B cell (primary cell): ENCODE measurements at regions of chr11 and their contacts with region 1.

Region 1: DNA sequence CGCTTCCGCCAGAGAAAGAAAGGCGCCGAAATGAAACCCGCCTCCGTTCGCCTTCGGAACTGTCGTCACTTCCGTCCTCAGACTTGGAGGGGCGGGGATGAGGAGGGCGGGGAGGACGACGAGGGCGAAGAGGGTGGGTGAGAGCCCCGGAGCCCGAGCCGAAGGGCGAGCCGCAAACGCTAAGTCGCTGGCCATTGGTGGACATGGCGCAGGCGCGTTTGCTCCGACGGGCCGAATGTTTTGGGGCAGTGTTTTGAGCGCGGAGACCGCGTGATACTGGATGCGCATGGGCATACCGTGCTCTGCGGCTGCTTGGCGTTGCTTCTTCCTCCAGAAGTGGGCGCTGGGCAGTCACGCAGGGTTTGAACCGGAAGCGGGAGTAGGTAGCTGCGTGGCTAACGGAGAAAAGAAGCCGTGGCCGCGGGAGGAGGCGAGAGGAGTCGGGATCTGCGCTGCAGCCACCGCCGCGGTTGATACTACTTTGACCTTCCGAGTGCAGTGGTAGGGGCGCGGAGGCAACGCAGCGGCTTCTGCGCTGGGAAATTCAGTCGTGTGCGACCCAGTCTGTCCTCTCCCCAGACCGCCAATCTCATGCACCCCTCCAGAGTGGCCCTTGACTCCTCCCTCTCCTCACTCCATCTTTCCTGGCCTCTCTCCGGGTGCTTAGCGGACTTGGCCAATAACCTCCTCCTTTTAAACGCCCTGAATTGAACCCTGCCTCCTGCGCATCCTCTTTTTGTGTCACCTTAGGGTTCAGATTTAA is at the start of gene ATM:
- DNase-seq: peak; percentile 100
- ATAC-seq: peak; percentile 81
- H3K4me3 ChIP-seq: peak within 1 kb of the TSS; percentile 97 to 99 (median 98)
- H3K4me3 Mint-ChIP-seq: no peak within 1 kb of the TSS
- H3K27ac ChIP-seq: peak within 1 kb of the TSS; percentile 98 to 99
- H3K27ac Mint-ChIP-seq: no peak within 1 kb of the TSS
- H3K4me1 ChIP-seq: peaks cover 58% of the 10 kb centered on the region in 2 donors
- H3K4me1 Mint-ChIP-seq: peaks cover 62% of the 10 kb centered on the region
- H3K27me3 ChIP-seq: no peaks in the 10 kb centered on the region
- H3K27me3 Mint-ChIP-seq: no peaks in the 10 kb centered on the region
- CTCF ChIP-seq: peak; percentile 77
- total RNA-seq, gene ATM: 446 and 471 TPM in 2 replicates

Region 2: DNA sequence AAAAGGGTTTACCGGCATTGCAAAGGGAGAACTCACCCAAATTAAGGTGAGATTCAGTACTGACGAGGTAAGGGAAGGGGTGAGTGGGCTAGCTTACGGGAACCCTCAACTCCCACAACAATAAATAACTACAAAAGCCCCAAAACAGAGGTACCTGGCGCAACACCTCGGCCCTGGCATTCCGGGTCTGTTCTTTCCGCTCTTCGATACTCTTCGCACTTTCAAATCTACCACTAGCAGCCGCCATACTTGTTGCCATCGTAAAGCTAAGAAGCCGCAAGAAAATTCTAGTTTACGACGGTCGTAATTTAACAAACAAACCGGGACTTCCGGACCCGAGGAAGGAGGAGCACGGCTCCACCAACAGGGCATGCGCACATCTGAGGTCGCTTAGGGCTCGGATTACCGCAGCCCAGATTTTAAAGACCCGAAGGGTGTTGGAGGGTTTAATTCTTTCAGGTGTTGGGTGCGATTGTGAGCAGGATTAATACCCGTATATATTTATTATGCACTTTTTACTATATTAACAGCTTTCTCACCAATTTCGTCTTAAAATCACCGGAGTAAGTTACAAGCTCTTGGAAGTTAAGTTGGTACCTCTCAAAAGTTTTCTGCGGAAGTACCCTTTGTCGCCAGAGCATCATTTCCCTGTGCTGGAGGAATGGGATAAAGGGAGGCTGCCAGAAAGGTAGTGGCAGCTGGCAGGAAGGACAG is 765.2 kb before region 1 on chr11 and contains the start of gene CWF19L2:
- CTCF ChIA-PET with region 1: no interaction called
- POLR2A ChIA-PET with region 1: no interaction called
- intact Hi-C with region 1: loop called (anchors 2 kb)
- DNase-seq: peak; percentile 94
- ATAC-seq: peak; percentile 96
- H3K4me3 ChIP-seq: peak within 1 kb of the TSS; percentile 65 to 99 (median 94)
- H3K4me3 Mint-ChIP-seq: peak within 1 kb of the TSS; percentile 94
- H3K27ac ChIP-seq: peak within 1 kb of the TSS; percentile 64 to 88
- H3K27ac Mint-ChIP-seq: peak within 1 kb of the TSS; percentile 93
- H3K4me1 ChIP-seq: peaks cover 12 to 14% of the 10 kb centered on the region in 2 donors
- H3K4me1 Mint-ChIP-seq: peaks cover 27% of the 10 kb centered on the region
- H3K27me3 ChIP-seq: no peaks in the 10 kb centered on the region
- H3K27me3 Mint-ChIP-seq: peaks cover 5% of the 10 kb centered on the region
- CTCF ChIP-seq: no peak
- total RNA-seq, gene CWF19L2: 44.3 and 44.6 TPM in 2 replicates

Region 3: DNA sequence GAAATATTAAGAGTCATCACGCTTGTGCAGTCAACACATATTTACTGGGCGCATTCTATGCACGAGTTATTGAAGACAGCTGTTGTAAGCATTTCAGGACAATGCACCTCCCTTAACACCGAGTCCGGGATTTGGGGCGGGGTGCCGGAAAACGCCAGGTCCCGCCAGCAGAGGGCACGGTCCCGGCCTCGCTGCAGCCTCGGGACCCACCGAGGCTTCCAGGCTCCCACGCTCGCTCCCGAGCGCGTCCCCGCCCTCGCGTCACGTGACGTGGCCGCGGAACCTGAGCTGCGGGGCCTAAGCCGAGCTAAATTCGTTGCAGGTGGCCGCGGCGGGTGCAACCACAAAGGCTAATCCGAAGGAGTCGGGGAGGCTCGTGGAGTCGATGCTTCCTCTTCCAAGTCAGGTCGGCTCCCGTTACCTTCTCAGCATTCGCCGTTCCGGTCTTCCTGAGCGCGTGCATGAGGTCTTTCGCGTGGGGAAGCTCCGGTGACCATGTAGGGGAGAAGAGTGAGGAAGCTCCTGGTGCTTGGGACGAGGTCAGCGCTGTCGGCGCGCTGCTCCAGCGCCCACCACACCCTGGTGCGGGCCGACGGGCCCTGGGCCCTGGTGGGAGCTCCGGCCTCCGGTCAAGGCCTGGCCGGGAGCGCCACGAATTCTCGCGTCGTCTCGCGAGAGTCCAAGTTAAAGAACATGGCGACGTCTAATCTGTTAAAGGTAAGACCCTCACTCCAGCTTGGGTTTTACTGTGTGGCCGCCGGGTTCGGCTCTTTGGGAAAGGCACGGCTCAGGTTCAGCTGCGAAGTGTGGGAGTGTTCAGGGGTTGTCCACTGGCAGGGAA is 214.0 kb before region 1 on chr11 and contains the start of gene CUL5:
- CTCF ChIA-PET with region 1: interaction called, 7 read pairs
- POLR2A ChIA-PET with region 1: no interaction called
- intact Hi-C with region 1: loop called (anchors 2 kb)
- DNase-seq: peak; percentile 95
- ATAC-seq: peak; percentile 91
- H3K4me3 ChIP-seq: peak within 1 kb of the TSS; percentile 79 to 100 (median 99)
- H3K4me3 Mint-ChIP-seq: peak within 1 kb of the TSS; percentile 99
- H3K27ac ChIP-seq: peak within 1 kb of the TSS; percentile 95 to 97
- H3K27ac Mint-ChIP-seq: peak within 1 kb of the TSS; percentile 98
- H3K4me1 ChIP-seq: peaks cover 18 to 20% of the 10 kb centered on the region in 2 donors
- H3K4me1 Mint-ChIP-seq: peaks cover 26% of the 10 kb centered on the region
- H3K27me3 ChIP-seq: no peaks in the 10 kb centered on the region
- H3K27me3 Mint-ChIP-seq: no peaks in the 10 kb centered on the region
- CTCF ChIP-seq: peak; percentile 80
- total RNA-seq, gene CUL5: 44.1 and 47.0 TPM in 2 replicates

Region 4: GRCh38 chr11:108197351-108197750 is 25.5 kb before region 1 on chr11:
- CTCF ChIA-PET with region 1: no interaction called
- POLR2A ChIA-PET with region 1: no interaction called
- intact Hi-C with region 1: no loop called
- DNase-seq: no peak
- ATAC-seq: no peak
- H3K4me3 ChIP-seq: no peak overlapping the region
- H3K4me3 Mint-ChIP-seq: no peak overlapping the region
- H3K27ac ChIP-seq: no peak overlapping the region
- H3K27ac Mint-ChIP-seq: no peak overlapping the region
- H3K4me1 ChIP-seq: peaks cover 14 to 19% of the 10 kb centered on the region in 2 donors
- H3K4me1 Mint-ChIP-seq: peaks cover 40% of the 10 kb centered on the region
- H3K27me3 ChIP-seq: no peaks in the 10 kb centered on the region
- H3K27me3 Mint-ChIP-seq: no peaks in the 10 kb centered on the region
- CTCF ChIP-seq: no peak

Region 5: DNA sequence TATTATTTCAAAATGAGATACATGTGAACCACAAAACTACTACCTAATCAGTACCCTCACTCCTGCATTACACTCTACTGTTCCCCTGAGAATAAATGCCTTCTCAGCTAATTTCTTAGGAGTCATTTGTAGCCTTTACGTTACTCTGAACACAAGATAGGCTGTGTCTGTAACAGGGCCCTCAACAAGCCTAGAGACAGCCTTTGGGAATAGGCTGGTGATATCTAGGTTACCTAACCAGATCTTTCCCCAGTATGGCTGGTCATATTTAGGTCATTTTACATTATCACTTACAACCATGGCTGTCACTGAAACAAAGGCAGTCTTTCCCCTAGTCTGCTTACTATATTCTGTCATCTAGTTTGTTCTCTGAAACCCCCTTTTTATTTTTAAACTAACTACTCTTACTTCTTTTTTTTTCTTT is 14.2 kb after region 1 on chr11:
- CTCF ChIA-PET with region 1: interaction called, 46 read pairs
- POLR2A ChIA-PET with region 1: interaction called, 46 read pairs
- intact Hi-C with region 1: loop called (anchors 1 kb)
- DNase-seq: peak; percentile 52
- ATAC-seq: peak; percentile 26
- H3K4me3 ChIP-seq: peak overlapping the region in 3 of 5 experiments; percentile 11 to 57 (median 33)
- H3K4me3 Mint-ChIP-seq: peak overlapping the region; percentile 72
- H3K27ac ChIP-seq: peak overlapping the region; percentile 83 to 90
- H3K27ac Mint-ChIP-seq: peak overlapping the region; percentile 86
- H3K4me1 ChIP-seq: peaks cover 27 to 45% of the 10 kb centered on the region in 2 donors
- H3K4me1 Mint-ChIP-seq: peaks cover 43% of the 10 kb centered on the region
- H3K27me3 ChIP-seq: no peaks in the 10 kb centered on the region
- H3K27me3 Mint-ChIP-seq: no peaks in the 10 kb centered on the region
- CTCF ChIP-seq: no peak

Region 6: GRCh38 chr11:108364159-108364558 is 141.3 kb after region 1 on chr11:
- CTCF ChIA-PET with region 1: no interaction called
- POLR2A ChIA-PET with region 1: interaction called, 10 read pairs
- intact Hi-C with region 1: no loop called
- DNase-seq: no peak
- ATAC-seq: no peak
- H3K4me3 ChIP-seq: no peak overlapping the region
- H3K4me3 Mint-ChIP-seq: no peak overlapping the region
- H3K27ac ChIP-seq: no peak overlapping the region
- H3K27ac Mint-ChIP-seq: no peak overlapping the region
- H3K4me1 ChIP-seq: no peaks in the 10 kb centered on the region
- H3K4me1 Mint-ChIP-seq: no peaks in the 10 kb centered on the region
- H3K27me3 ChIP-seq: no peaks in the 10 kb centered on the region
- H3K27me3 Mint-ChIP-seq: no peaks in the 10 kb centered on the region
- CTCF ChIP-seq: no peak

Region 7: DNA sequence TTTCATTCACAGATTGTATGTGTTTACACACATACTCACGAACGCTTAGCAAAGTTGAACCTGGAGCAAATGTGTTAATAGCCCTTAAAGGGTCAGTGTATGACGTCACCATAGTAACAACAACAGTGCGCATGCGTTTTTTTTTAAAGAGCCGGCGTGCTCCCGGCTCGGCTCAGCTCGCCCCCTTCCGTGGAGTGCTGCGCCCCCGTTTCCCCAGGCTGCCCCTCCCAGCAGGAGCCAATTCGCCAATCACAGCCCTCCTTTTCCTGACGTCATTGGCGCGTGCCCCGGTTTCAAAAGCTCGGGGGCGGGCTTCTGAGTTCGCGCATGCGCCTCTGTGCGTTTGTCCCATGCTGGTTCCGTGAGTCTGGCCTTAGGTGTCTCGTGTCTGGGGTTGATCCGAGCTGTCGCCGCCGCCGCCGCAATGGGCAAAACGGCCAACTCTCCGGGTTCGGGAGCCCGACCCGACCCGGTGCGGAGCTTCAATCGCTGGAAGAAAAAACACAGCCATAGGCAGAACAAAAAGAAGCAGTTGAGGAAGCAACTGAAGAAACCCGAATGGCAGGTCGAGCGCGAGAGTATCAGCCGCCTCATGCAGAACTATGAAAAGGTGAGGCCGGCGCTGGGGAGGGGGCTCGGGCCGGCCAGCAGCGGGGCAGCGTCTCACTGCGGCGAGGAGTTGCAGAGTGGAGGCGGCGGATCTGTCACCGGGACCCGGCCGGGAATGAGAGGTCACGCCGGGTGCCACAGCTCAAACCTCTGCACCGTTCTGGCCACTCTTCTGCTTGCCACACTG is 442.1 kb after region 1 on chr11 and contains the start of gene DDX10:
- CTCF ChIA-PET with region 1: no interaction called
- POLR2A ChIA-PET with region 1: no interaction called
- intact Hi-C with region 1: loop called (anchors 1 kb)
- DNase-seq: peak; percentile 99
- ATAC-seq: peak; percentile 100
- H3K4me3 ChIP-seq: peak within 1 kb of the TSS; percentile 69 to 94 (median 85)
- H3K4me3 Mint-ChIP-seq: peak within 1 kb of the TSS; percentile 98
- H3K27ac ChIP-seq: peak within 1 kb of the TSS; percentile 52 to 76
- H3K27ac Mint-ChIP-seq: peak within 1 kb of the TSS; percentile 92
- H3K4me1 ChIP-seq: peaks cover 30 to 32% of the 10 kb centered on the region in 2 donors
- H3K4me1 Mint-ChIP-seq: peaks cover 54% of the 10 kb centered on the region
- H3K27me3 ChIP-seq: no peaks in the 10 kb centered on the region
- H3K27me3 Mint-ChIP-seq: peaks cover 5% of the 10 kb centered on the region
- CTCF ChIP-seq: no peak
- total RNA-seq, gene DDX10: 30.6 and 35.8 TPM in 2 replicates

Region 8: GRCh38 chr11:108887436-108888238 is 664.8 kb after region 1 on chr11:
- CTCF ChIA-PET with region 1: no interaction called
- POLR2A ChIA-PET with region 1: no interaction called
- intact Hi-C with region 1: no loop called
- DNase-seq: no peak
- ATAC-seq: no peak
- H3K4me3 ChIP-seq: no peak overlapping the region
- H3K4me3 Mint-ChIP-seq: no peak overlapping the region
- H3K27ac ChIP-seq: no peak overlapping the region
- H3K27ac Mint-ChIP-seq: no peak overlapping the region
- H3K4me1 ChIP-seq: no peaks in the 10 kb centered on the region
- H3K4me1 Mint-ChIP-seq: peaks cover under 1% of the 10 kb centered on the region
- H3K27me3 ChIP-seq: no peaks in the 10 kb centered on the region
- H3K27me3 Mint-ChIP-seq: no peaks in the 10 kb centered on the region
- CTCF ChIP-seq: no peak